ENCODE measurements at regions of chr4 and their contacts with region 1.

Region 1: GRCh38 chr4:18593445-18594002 is 572.0 kb upstream of the LCORL start:
- DNase-seq: peak; percentile 80
- H3K4me3 ChIP-seq: no peak overlapping the region
- H3K27ac ChIP-seq: no peak overlapping the region
- H3K4me1 ChIP-seq: no peaks in the 10 kb centered on the region
- H3K27me3 ChIP-seq: no peaks in the 10 kb centered on the region
- CTCF ChIP-seq: peak; percentile 70 to 73
- POLR2A ChIP-seq: no peak

Region 2: DNA sequence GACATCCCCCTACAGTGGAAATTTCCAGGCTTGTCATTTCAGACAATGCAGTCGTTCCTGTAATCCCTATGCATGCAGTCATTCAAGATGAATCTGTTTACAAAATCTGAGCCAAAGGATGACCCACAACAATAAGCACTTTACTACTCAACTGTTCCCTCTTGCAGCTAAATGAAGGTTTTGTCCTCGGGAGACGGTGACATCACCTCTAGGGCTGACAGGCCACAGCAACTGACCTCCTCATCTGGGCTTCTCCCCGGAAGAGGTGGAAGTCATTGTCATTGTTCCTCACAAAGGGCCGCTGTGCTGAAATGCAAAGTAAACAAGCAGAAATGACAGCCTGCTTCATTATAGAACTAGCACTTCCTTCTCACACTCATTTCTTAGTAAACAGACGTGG is 1049.3 kb before region 1 on chr4:
- CTCF ChIA-PET with region 1: interaction called, 10 read pairs
- POLR2A ChIA-PET with region 1: no interaction called
- dilution Hi-C with region 1: no loop called
- intact Hi-C with region 1: loop called (anchors 1 kb)
- DNase-seq: no peak
- H3K4me3 ChIP-seq: no peak overlapping the region
- H3K27ac ChIP-seq: no peak overlapping the region
- H3K4me1 ChIP-seq: peaks cover 4% of the 10 kb centered on the region
- H3K27me3 ChIP-seq: peaks cover 2 to 3% of the 10 kb centered on the region in 2 experiments
- CTCF ChIP-seq: no peak
- POLR2A ChIP-seq: no peak

Region 3: GRCh38 chr4:17636696-17637622 is 956.6 kb before region 1 on chr4:
- CTCF ChIA-PET with region 1: no interaction called
- POLR2A ChIA-PET with region 1: no interaction called
- dilution Hi-C with region 1: no loop called
- intact Hi-C with region 1: loop called (anchors 2 kb)
- DNase-seq: peak; percentile 56
- H3K4me3 ChIP-seq: no peak overlapping the region
- H3K27ac ChIP-seq: no peak overlapping the region
- H3K4me1 ChIP-seq: no peaks in the 10 kb centered on the region
- H3K27me3 ChIP-seq: no peaks in the 10 kb centered on the region
- CTCF ChIP-seq: peak; percentile 79 to 93
- POLR2A ChIP-seq: no peak

Region 4: GRCh38 chr4:17934286-17934685 is 659.2 kb before region 1 on chr4:
- CTCF ChIA-PET with region 1: interaction called, 3 read pairs
- POLR2A ChIA-PET with region 1: no interaction called
- dilution Hi-C with region 1: no loop called
- intact Hi-C with region 1: loop called (anchors 1 kb)
- DNase-seq: no peak
- H3K4me3 ChIP-seq: no peak overlapping the region
- H3K27ac ChIP-seq: no peak overlapping the region
- H3K4me1 ChIP-seq: no peaks in the 10 kb centered on the region
- H3K27me3 ChIP-seq: no peaks in the 10 kb centered on the region
- CTCF ChIP-seq: no peak
- POLR2A ChIP-seq: no peak

Region 5: DNA sequence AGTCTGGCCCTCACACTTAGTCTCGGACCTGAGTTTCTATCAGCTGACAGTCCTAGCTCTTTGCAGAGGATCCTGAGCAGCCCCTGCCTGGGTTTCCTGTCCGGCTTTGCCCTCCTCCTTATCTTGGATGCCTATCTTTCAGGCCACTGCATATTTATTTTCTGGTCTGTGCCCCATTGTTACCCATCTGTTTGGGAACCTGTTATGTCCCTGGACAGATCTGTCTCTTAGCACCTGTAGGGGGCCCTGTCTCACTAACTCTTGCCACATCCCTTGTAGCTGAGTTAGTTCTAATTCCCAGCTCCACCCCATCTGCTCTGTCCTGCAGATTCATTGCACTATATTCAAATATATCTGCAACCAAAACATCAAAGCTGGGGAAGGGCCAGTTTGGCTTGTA is 57.1 kb before region 1 on chr4:
- CTCF ChIA-PET with region 1: interaction called, 3 read pairs
- POLR2A ChIA-PET with region 1: no interaction called
- dilution Hi-C with region 1: no loop called
- intact Hi-C with region 1: loop called (anchors 1 kb)
- DNase-seq: peak; percentile 32
- H3K4me3 ChIP-seq: no peak overlapping the region
- H3K27ac ChIP-seq: no peak overlapping the region
- H3K4me1 ChIP-seq: peaks cover 45% of the 10 kb centered on the region
- H3K27me3 ChIP-seq: no peaks in the 10 kb centered on the region
- CTCF ChIP-seq: peak; percentile 16 to 37
- POLR2A ChIP-seq: no peak

Region 6: GRCh38 chr4:18559492-18559891 is 34.0 kb before region 1 on chr4:
- CTCF ChIA-PET with region 1: no interaction called
- POLR2A ChIA-PET with region 1: no interaction called
- dilution Hi-C with region 1: no loop called
- intact Hi-C with region 1: no loop called
- DNase-seq: no peak
- H3K4me3 ChIP-seq: no peak overlapping the region
- H3K27ac ChIP-seq: no peak overlapping the region
- H3K4me1 ChIP-seq: no peaks in the 10 kb centered on the region
- H3K27me3 ChIP-seq: no peaks in the 10 kb centered on the region
- CTCF ChIP-seq: no peak
- POLR2A ChIP-seq: no peak